ENCODE measurements at regions of chr2 and their contacts with region 1.

Region 1: DNA sequence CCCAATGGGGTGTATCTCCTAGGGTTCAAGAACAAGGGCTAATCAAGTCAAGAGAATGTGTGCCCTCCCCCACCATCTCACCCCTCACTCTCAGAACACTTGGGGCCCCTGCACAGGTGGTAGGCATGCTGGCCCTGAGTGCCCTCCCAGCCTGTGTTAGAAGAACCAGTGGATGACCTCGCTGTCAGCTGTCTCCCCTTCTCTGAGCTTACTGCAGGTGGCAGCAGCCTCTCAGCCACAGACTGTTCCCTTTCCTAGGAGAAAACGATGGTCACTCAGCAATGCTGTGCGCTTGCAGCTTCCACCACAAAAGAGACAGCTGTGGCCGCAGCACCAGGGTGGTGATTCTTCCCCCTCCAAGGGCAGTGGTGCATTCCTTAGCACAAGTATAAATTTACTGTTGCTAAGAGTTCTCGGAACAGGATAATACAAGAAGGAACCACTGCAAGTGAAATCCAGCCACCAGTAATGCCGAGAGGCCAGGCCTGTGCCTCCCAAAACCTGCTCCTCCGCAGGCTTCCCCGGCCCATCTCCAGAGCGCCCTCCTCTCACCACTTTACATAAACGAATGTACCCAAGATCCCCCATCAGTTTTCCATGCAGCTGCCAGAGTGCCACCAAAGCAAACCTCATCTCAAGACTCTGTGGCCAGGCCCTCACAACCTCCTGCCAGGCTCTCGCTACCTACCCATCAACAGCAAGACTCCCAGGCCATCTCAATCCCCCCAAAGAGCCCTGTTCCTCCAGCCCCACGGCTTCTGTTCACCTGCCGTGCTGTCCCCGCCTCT is 935 bp upstream of the RAMP1 start:
- DNase-seq: peak; percentile 72
- H3K4me3 Mint-ChIP-seq: peak overlapping the region; percentile 67
- H3K27ac Mint-ChIP-seq: no peak overlapping the region
- H3K4me1 Mint-ChIP-seq: peaks cover 28% of the 10 kb centered on the region
- H3K27me3 Mint-ChIP-seq: peaks cover 55% of the 10 kb centered on the region
- CTCF ChIP-seq: peak; percentile 77

Region 2: DNA sequence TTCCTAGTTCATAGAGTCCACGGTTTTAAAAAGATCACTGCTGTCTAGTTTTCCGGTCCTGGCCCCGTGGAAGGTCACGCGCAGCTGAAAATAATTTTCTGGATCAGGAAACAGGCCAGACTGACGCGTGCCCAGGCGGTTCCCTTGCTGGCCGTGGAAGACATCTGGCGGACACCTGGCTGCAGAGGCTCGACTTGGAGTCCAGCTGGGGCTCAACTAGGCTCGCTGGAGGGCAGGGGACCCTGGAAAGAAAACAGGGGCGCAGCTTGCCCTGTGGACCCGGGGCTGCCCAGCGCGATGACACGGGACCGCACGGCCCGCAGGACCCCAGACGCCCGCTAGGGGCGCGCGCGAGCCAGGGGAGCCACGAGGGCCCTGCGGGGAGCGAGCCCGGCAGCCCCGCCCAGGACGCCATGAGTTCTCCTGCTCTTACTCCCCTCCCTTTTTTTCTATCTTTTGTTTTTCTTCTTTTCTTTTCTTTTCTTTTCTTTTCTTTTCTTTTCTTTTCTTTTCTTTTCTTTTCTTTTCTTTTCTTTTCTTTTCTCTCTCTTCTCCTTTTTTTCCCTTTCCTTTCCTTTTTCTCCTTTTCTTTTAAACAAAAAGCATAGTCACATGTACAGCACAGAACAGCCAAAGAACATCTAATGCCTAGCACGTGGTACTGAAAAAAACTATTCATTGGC is 65.1 kb after region 1 on chr2:
- CTCF ChIA-PET with region 1: interaction called, 5 read pairs
- intact Hi-C with region 1: loop called (anchors 10 kb)
- DNase-seq: peak; percentile 94
- H3K4me3 Mint-ChIP-seq: peak overlapping the region; percentile 9
- H3K27ac Mint-ChIP-seq: no peak overlapping the region
- H3K4me1 Mint-ChIP-seq: peaks cover 9% of the 10 kb centered on the region
- H3K27me3 Mint-ChIP-seq: peaks cover 14% of the 10 kb centered on the region
- CTCF ChIP-seq: peak; percentile 97

Region 3: DNA sequence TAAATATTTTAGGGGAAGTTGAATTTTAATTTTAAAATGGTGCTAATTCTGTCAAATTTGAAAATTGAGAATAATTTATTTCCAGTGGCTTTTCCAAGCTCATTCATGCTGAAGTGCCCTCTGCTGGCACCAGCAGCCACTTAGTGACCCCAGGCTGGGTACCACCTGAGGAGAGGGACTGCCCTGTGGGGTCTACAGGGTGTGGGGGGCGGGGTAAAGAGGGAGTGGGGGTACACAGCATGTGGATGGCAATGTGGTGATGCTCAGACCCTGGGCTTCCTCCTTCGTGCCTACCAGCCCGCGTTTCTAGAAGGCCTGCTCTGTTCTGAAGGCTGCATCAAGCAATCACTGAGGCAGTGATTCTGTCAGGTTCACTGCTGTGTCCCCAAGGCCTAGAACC is 157.2 kb after region 1 on chr2:
- CTCF ChIA-PET with region 1: interaction called, 13 read pairs
- intact Hi-C with region 1: loop called (anchors 5 kb)
- DNase-seq: no peak
- H3K4me3 Mint-ChIP-seq: no peak overlapping the region
- H3K27ac Mint-ChIP-seq: no peak overlapping the region
- H3K4me1 Mint-ChIP-seq: no peaks in the 10 kb centered on the region
- H3K27me3 Mint-ChIP-seq: no peaks in the 10 kb centered on the region
- CTCF ChIP-seq: no peak

Region 4: GRCh38 chr2:238106686-238107524 is 248.4 kb after region 1 on chr2:
- CTCF ChIA-PET with region 1: interaction called, 7 read pairs
- intact Hi-C with region 1: loop called (anchors 1 kb)
- DNase-seq: peak; percentile 32
- H3K4me3 Mint-ChIP-seq: no peak overlapping the region
- H3K27ac Mint-ChIP-seq: no peak overlapping the region
- H3K4me1 Mint-ChIP-seq: no peaks in the 10 kb centered on the region
- H3K27me3 Mint-ChIP-seq: peaks cover 35% of the 10 kb centered on the region
- CTCF ChIP-seq: peak; percentile 25

Region 5: DNA sequence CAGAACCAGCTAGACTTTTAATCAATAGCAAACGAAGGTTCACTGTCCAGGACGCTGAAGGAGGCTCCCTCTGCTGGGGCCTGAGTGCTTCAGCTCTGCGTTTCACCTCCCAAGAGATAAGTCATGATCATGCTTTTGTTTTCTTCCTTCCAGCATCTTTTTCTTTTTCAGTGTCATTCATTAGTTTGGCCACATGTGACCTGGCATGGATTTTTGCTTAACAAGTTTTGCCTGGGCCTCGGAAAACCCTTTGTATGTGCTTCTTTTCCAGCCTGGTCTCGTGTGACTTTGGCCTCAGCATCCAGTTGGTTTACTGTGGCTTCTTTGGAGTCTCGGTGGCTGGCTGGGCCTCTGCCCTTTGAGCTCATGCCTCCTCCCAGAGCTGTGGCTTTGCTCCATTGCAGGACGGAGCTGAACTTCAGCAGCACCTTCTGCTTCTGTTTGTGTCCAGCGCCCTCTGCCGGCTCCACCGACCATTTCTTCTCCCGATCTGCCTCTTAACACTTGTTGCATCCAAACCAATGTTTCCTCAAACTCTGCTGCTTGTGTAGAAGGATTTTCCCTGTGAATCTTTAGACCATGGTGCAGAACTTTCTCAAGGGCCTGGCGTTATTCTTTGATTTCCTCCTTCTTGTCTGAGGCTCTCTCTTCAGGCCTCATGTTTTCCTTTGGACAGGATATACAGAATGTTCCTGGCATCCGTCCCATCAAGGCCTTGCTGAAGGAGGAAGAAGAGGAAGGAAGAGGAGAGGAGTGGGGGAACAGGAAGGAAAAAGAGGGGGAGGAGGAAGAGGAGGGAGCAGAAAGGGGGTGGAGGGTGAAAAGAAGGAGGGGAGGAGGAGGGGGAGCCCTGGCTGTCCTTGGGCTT is 404.9 kb after region 1 on chr2:
- CTCF ChIA-PET with region 1: interaction called, 4 read pairs
- intact Hi-C with region 1: loop called (anchors 10 kb)
- DNase-seq: peak; percentile 83
- H3K4me3 Mint-ChIP-seq: no peak overlapping the region
- H3K27ac Mint-ChIP-seq: no peak overlapping the region
- H3K4me1 Mint-ChIP-seq: peaks cover 9% of the 10 kb centered on the region
- H3K27me3 Mint-ChIP-seq: no peaks in the 10 kb centered on the region
- CTCF ChIP-seq: peak; percentile 84